ENCODE measurements at regions of chr1 and their contacts with region 1.

Region 1: GRCh38 chr1:174276087-174276486 is 116.8 kb downstream of the RABGAP1L start:
- DNase-seq: no peak
- ATAC-seq: no peak
- H3K4me3 ChIP-seq: no peak overlapping the region
- H3K27ac ChIP-seq: no peak overlapping the region
- H3K4me1 ChIP-seq: no peaks in the 10 kb centered on the region
- H3K27me3 ChIP-seq: no peaks in the 10 kb centered on the region
- CTCF ChIP-seq: no peak

Region 2: DNA sequence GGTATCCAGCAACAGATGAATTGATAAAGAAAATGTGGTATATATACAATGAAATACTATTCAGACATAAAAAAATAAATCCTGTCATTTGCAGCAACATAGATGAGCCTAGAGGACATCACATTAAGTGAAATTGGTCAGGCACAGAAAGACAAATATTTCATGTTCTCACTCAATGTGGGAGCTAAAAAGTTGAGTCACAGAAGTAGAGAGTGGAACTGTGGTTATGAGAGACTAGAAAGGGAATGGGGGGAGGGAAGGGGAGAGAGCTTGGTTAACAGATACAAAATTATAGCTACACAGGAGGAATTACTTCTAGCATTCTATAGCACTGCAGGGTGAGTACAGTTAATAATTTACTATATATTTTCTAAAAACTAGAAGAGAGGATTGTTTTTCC is 321.9 kb before region 1 on chr1:
- CTCF ChIA-PET with region 1: no interaction called
- POLR2A ChIA-PET with region 1: no interaction called
- intact Hi-C with region 1: no loop called
- DNase-seq: no peak
- ATAC-seq: no peak
- H3K4me3 ChIP-seq: no peak overlapping the region
- H3K27ac ChIP-seq: no peak overlapping the region
- H3K4me1 ChIP-seq: no peaks in the 10 kb centered on the region
- H3K27me3 ChIP-seq: no peaks in the 10 kb centered on the region
- CTCF ChIP-seq: no peak

Region 3: GRCh38 chr1:174174461-174175329 is 101.4 kb before region 1 on chr1:
- CTCF ChIA-PET with region 1: no interaction called
- POLR2A ChIA-PET with region 1: no interaction called
- intact Hi-C with region 1: no loop called
- DNase-seq: no peak
- ATAC-seq: no peak
- H3K4me3 ChIP-seq: no peak overlapping the region
- H3K27ac ChIP-seq: no peak overlapping the region
- H3K4me1 ChIP-seq: no peaks in the 10 kb centered on the region
- H3K27me3 ChIP-seq: no peaks in the 10 kb centered on the region
- CTCF ChIP-seq: no peak

Region 4: GRCh38 chr1:174191255-174191906 is 84.7 kb before region 1 on chr1:
- CTCF ChIA-PET with region 1: no interaction called
- POLR2A ChIA-PET with region 1: no interaction called
- intact Hi-C with region 1: no loop called
- DNase-seq: peak; percentile 28
- ATAC-seq: peak; percentile 73
- H3K4me3 ChIP-seq: no peak overlapping the region
- H3K27ac ChIP-seq: no peak overlapping the region
- H3K4me1 ChIP-seq: no peaks in the 10 kb centered on the region
- H3K27me3 ChIP-seq: no peaks in the 10 kb centered on the region
- CTCF ChIP-seq: no peak

Region 5: DNA sequence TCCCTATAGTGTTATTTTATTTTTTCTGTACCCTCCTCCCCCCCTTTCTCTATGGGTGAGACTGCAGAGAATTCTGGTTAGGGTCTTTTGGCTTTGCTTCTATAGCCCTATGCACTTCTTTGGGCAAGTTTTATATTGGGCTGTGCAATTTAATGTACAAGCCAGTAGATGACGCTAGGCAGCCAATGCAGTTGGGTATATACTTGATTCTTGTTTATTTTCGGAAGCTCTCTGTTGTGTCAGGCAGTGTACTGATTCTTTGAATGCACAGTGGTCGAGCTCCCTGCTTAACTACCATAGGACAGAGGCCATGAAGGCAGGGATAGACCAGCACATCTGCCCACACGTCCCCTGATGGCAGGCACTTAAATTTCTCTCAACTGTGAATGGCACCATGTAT is 137.5 kb after region 1 on chr1:
- CTCF ChIA-PET with region 1: no interaction called
- POLR2A ChIA-PET with region 1: no interaction called
- intact Hi-C with region 1: loop called (anchors 10 kb)
- DNase-seq: no peak
- ATAC-seq: no peak
- H3K4me3 ChIP-seq: no peak overlapping the region
- H3K27ac ChIP-seq: no peak overlapping the region
- H3K4me1 ChIP-seq: no peaks in the 10 kb centered on the region
- H3K27me3 ChIP-seq: no peaks in the 10 kb centered on the region
- CTCF ChIP-seq: peak; percentile 46

Measured in PC-3 (cell line).